IMR-90 (cell line): ENCODE measurements at regions of chr6 and their contacts with region 1.

Region 1: GRCh38 chr6:34425498-34426410 is at the start of gene RPS10:
- DNase-seq: peak; percentile 92
- ATAC-seq: peak; percentile 98
- H3K4me3 ChIP-seq: peak within 1 kb of the TSS; percentile 82
- H3K27ac ChIP-seq: peak within 1 kb of the TSS; percentile 81
- H3K4me1 ChIP-seq: peaks cover 2% of the 10 kb centered on the region
- H3K27me3 ChIP-seq: no peaks in the 10 kb centered on the region; the same call in 1 of the 2 replicates
- CTCF ChIP-seq: 0 out of 2 replicates have a peak, but pooled peaks have one; percentile 14
- POLR2A ChIP-seq: peak; percentile 95
- RAD21 ChIP-seq: no peak
- total RNA-seq, gene RPS10: 3,662 and 5,584 TPM in 2 replicates

Region 2: DNA sequence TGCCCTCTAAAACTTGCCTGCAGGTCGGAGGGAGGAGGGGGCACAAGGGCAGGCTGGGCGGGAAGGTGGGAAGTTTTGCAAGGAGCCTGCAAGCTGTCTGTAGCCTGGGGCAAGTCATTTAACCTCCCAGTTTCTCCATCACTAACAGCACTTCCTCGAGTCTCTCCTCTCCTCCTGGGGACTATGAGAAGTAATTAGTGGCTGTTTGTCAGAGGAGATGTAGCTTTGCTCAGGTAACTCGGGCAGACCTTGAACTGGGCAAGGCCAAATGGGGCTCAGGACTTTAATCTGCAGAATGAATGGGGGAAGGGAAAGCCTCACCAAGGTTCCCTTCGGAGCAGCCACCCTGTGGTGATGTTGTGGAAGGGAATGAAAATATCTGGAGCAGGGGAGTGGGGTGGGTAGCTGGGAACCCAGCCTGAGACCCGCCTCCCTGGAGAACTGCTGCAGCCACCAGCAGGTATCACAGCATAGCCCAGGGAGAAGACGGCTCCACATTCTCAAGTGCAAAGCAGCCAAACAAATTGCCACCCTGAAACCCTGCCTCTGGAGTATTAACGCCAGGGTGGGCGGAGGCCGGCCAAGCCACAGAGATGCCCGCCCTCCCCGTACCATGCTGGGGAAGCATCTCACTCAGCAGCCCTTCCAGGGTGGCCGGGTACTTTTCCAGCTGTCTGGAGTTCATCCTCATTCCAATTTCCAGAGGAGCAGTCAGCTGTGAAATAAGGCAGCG is 630.7 kb before region 1 on chr6:
- CTCF ChIA-PET with region 1: no interaction called
- POLR2A ChIA-PET with region 1: no interaction called
- dilution Hi-C with region 1: no loop called
- in situ Hi-C with region 1: no loop called
- intact Hi-C with region 1: no loop called
- DNase-seq: no peak
- ATAC-seq: no peak
- H3K4me3 ChIP-seq: no peak overlapping the region
- H3K27ac ChIP-seq: no peak overlapping the region
- H3K4me1 ChIP-seq: no peaks in the 10 kb centered on the region
- H3K27me3 ChIP-seq: peaks cover 20% of the 10 kb centered on the region
- CTCF ChIP-seq: no peak
- POLR2A ChIP-seq: no peak
- RAD21 ChIP-seq: no peak

Region 3: GRCh38 chr6:34182751-34183531 is 242.8 kb before region 1 on chr6:
- CTCF ChIA-PET with region 1: no interaction called
- POLR2A ChIA-PET with region 1: interaction called, 14 read pairs
- dilution Hi-C with region 1: no loop called
- in situ Hi-C with region 1: no loop called
- intact Hi-C with region 1: no loop called
- DNase-seq: no peak
- ATAC-seq: no peak
- H3K4me3 ChIP-seq: no peak overlapping the region
- H3K27ac ChIP-seq: no peak overlapping the region
- H3K4me1 ChIP-seq: no peaks in the 10 kb centered on the region
- H3K27me3 ChIP-seq: peaks cover 6% of the 10 kb centered on the region
- CTCF ChIP-seq: no peak
- POLR2A ChIP-seq: no peak
- RAD21 ChIP-seq: no peak

Region 4: DNA sequence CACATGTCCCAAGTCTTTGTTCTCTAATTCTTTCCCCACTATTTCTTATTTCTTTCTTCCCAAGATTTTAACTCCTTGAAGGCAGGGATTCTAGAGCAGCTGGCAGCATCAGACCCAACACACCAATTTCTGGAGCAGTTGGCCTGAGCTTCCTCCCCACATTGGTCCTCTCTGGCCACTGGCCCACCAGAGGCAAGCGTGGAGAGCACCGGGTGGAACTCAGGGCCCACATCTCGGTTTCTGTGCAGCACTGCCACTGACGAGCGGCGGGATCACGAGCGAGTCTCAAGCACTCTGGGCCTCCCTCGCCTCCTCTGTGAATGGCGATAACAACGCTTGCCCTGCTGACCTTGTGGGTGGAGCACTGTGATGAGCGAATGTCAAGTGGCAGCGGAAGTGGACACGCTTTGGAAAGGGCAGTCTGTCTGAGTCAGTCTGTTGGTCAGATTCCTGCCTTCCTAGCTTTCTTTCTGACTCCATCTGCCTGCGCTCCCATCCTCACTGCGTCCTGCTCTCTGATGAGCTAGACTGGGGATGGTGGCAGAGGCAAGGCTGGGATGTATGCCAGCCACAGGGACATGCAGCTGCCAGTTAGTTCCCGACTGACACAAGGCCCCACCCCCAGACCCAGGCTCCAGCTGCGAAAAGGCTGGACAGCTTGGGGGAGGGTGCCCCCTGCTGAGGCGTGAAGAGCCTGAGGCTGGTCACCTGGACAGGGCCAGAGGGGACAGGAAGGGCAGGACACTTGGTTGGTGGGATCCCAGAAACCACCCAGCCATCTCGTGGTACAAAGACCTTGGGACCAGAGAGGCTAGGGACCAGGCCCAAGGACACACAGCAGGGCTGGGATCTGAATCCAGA is 134.8 kb after region 1 on chr6:
- CTCF ChIA-PET with region 1: interaction called, 10 read pairs
- POLR2A ChIA-PET with region 1: no interaction called
- dilution Hi-C with region 1: no loop called
- in situ Hi-C with region 1: no loop called
- intact Hi-C with region 1: no loop called
- DNase-seq: peak; percentile 75
- ATAC-seq: peak; percentile 86
- H3K4me3 ChIP-seq: no peak overlapping the region
- H3K27ac ChIP-seq: no peak overlapping the region
- H3K4me1 ChIP-seq: peaks cover 6% of the 10 kb centered on the region
- H3K27me3 ChIP-seq: peaks cover under 1% of the 10 kb centered on the region; the same call in 1 of the 2 replicates
- CTCF ChIP-seq: no peak
- POLR2A ChIP-seq: no peak
- RAD21 ChIP-seq: no peak

Region 5: DNA sequence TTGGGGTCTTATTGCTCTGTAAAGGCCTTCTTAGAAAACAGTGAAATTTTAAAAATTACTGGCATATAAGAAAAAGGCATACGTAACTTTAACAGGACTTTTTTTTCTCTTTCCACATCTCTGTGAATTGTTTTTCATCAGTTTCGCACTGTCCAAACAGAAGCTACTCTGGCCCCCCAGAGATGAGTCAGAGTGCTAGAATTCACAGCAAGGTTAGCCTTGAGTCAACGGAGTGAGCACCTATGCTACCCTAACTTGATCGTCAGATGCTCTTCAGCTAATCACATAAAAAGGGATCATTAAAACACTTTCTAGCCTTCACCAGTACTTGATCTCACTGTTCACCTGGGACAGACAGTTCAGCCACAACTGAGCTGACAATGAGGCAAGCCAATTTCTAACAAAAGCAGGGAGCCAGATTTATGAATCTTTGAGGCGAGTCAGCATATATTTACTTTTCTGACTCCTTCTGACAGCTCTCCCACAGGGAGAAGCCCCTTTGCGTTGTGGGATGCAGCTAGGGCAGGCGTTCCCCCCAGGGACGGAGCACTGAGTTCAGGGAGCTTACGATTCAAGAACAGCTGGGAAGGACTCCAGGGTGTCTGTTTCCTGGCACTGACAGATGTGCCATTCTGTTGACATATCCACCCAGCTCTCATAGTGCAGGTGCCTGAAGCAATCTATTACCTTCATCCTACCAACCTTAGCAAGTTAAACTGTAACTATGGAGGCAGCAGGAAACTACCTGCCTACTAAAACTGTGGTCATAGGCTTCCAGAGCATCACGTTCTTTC is 176.8 kb after region 1 on chr6:
- CTCF ChIA-PET with region 1: no interaction called
- POLR2A ChIA-PET with region 1: no interaction called
- dilution Hi-C with region 1: no loop called
- in situ Hi-C with region 1: loop called (anchors 10 kb)
- intact Hi-C with region 1: no loop called
- DNase-seq: peak; percentile 28
- ATAC-seq: peak; percentile 33; the same call in 1 of the 2 replicates
- H3K4me3 ChIP-seq: no peak overlapping the region
- H3K27ac ChIP-seq: no peak overlapping the region
- H3K4me1 ChIP-seq: peaks cover 10% of the 10 kb centered on the region
- H3K27me3 ChIP-seq: no peaks in the 10 kb centered on the region
- CTCF ChIP-seq: no peak
- POLR2A ChIP-seq: no peak
- RAD21 ChIP-seq: no peak